ENCODE measurements at regions of chr11 and their contacts with region 1.

Region 1: DNA sequence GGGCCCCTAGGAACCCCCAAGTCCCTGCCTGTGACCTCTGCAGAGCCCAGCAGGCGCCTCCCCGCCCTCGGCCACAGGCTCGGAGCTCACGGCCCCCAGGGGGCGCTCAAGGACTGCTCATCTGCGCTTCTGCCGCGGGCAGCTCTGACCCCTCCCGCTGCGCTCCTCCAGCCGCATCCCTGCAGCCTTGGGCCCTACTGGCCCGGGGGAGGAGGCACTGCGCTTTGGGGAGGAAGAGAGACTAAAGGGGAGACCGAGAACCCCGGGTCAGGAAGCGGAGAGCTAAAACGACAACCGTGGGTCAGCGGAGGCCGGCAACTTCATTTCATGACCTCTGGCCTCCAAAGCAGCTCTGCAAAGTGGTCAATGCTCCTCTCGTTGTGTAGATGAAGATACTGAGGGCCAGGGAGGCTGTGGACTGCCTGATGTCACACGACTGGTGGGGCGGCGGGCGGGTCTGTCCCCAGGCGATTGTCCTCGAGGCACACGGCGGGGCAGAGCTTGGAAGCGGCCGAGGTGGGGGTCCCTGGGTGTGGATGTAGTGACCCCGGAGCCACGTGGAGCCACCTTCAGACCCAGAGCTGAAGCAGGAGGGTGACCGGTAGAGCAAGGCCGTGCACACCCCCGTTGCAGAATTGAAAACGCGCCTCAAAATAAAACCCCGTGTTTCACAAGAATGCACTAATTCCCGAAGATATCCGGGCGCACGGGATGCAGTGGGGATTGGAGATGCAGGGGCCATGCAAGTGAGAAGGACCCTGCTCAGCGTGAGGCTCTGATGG is 2.7 kb upstream of the KRTAP5-6 start:
- DNase-seq: peak; percentile 84 to 98
- H3K4me3 ChIP-seq: peak overlapping the region in 3 of 4 experiments; percentile 29 to 59 (median 45); a peak in 3 of 8 replicates
- H3K27ac ChIP-seq: no peak overlapping the region
- H3K4me1 ChIP-seq: peaks cover 0 to 10% (median 3%) of the 10 kb centered on the region in 4 experiments; a peak in 3 of 7 replicates
- H3K27me3 ChIP-seq: peaks cover 0 to 7% (median 0%) of the 10 kb centered on the region in 4 experiments; a peak in 3 of 7 replicates
- CTCF ChIP-seq: peak; percentile 81 to 97 (median 86)
- EP300 ChIP-seq: peak in 1 of 2 experiments; percentile 49; a peak in 1 of 3 replicates
- POLR2A ChIP-seq: no peak
- RAD21 ChIP-seq: peak; percentile 91 to 95

Region 2: DNA sequence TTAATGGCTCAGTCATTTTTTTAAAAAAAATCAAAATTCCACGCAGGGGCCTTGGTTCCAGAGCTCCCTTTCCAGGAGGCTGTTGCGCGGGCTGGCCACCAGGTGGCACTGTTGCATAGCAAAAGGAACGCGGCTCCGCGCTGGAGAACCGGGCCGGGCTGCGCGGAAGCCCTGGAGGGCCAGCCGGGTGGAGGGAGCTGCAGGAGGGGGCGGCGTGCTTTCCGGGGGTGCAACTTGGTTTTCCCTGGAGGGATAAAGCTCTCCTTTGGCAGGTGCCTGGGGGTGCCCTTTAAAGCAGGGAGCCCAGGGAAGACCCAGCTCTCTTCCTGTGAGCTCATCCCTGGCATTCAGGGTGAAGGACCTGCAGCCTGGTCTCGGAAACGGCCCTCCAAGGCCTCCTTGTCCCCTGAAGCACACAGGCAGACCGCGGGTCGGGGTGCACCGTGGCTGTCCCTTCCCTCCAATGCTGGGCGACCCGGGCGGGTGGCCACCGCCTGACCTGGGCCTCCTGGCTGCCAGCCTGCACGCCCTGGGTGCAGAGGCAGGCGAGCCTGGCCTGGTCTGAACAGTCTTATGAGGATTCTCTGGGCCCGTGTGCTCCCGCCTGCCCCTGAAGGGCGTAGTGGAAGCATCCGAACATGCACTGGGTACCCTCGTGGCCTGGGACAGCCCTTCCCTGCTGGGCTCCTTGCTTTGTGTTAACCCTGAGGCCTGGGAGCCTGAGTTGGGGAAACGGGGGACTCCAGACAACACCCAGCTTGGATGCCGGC is 41.3 kb before region 1 on chr11:
- CTCF ChIA-PET with region 1: interaction called, 88 read pairs
- POLR2A ChIA-PET with region 1: interaction called, 3 read pairs
- DNase-seq: peak in 1 of 2 experiments; percentile 95
- H3K4me3 ChIP-seq: peak overlapping the region in 3 of 4 experiments; percentile 19 to 53 (median 26); a peak in 4 of 8 replicates
- H3K27ac ChIP-seq: no peak overlapping the region
- H3K4me1 ChIP-seq: peaks cover 0 to 6% (median 2%) of the 10 kb centered on the region in 4 experiments; a peak in 3 of 7 replicates
- H3K27me3 ChIP-seq: peaks cover 0 to 9% (median 6%) of the 10 kb centered on the region in 4 experiments; a peak in 4 of 7 replicates
- CTCF ChIP-seq: peak; percentile 76 to 92 (median 88)
- EP300 ChIP-seq: no peak
- POLR2A ChIP-seq: no peak
- RAD21 ChIP-seq: peak; percentile 94 to 97

Region 3: GRCh38 chr11:1728931-1729691 is 34.9 kb after region 1 on chr11:
- CTCF ChIA-PET with region 1: interaction called, 13 read pairs
- POLR2A ChIA-PET with region 1: no interaction called
- DNase-seq: no peak
- H3K4me3 ChIP-seq: no peak overlapping the region
- H3K27ac ChIP-seq: no peak overlapping the region
- H3K4me1 ChIP-seq: no peaks in the 10 kb centered on the region
- H3K27me3 ChIP-seq: peaks cover 0 to 5% (median 1%) of the 10 kb centered on the region in 4 experiments; a peak in 2 of 7 replicates
- CTCF ChIP-seq: no peak
- EP300 ChIP-seq: no peak
- POLR2A ChIP-seq: no peak
- RAD21 ChIP-seq: no peak

Region 4: DNA sequence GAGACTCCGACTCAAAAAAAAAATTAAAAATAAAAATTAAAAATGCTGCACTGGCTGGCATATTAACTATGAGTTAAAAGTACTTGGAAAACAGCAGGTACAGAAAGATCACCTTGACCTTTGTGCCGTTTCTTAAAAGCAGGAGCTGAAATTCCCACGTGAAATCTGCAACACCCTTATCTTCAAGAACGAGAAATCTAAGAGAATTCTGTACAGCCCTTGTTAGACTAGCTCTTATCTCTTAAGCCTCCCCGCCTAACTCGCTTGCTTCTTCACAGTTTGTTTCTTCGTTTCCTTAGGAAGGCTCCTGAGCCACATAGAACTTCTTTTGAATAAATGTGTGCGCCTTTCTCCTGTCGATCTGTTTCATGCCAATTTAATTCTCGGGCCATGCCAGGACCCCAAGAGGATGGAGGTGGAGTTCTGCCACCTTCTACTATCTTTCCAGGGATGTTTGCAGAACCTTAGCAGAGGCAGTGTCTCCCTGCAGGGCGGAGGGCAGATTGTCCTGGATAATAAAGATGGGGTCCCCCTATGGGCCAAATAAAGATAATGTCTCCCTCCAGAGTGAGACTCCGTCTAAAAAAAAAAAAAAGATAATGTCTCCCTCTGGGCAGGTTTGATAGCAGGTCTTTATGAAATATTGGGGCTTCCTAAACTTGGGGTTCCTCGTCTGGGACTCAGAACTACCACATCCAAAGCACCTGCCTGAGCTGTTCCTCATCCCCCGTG is 113.2 kb after region 1 on chr11:
- CTCF ChIA-PET with region 1: interaction called, 38 read pairs
- POLR2A ChIA-PET with region 1: no interaction called
- DNase-seq: no peak
- H3K4me3 ChIP-seq: no peak overlapping the region
- H3K27ac ChIP-seq: no peak overlapping the region
- H3K4me1 ChIP-seq: 0 out of 7 replicates have a peak, but pooled peaks cover 0 to 3% (median 0%) of the 10 kb centered on the region in 4 experiments
- H3K27me3 ChIP-seq: peaks cover 0 to 2% (median 1%) of the 10 kb centered on the region in 4 experiments; a peak in 2 of 7 replicates
- CTCF ChIP-seq: peak in 2 of 3 experiments; percentile 29 to 41; a peak in 3 of 4 replicates
- EP300 ChIP-seq: no peak
- POLR2A ChIP-seq: no peak
- RAD21 ChIP-seq: peak; percentile 6 to 28; a peak in 1 of 4 replicates

Region 5: GRCh38 chr11:1845561-1846452 is 151.6 kb after region 1 on chr11:
- CTCF ChIA-PET with region 1: interaction called, 11 read pairs
- POLR2A ChIA-PET with region 1: no interaction called
- DNase-seq: no peak
- H3K4me3 ChIP-seq: no peak overlapping the region
- H3K27ac ChIP-seq: no peak overlapping the region
- H3K4me1 ChIP-seq: peaks cover 0 to 3% (median 0%) of the 10 kb centered on the region in 4 experiments; a peak in 1 of 7 replicates
- H3K27me3 ChIP-seq: no peaks in the 10 kb centered on the region
- CTCF ChIP-seq: no peak
- EP300 ChIP-seq: no peak
- POLR2A ChIP-seq: no peak
- RAD21 ChIP-seq: no peak

Region 6: DNA sequence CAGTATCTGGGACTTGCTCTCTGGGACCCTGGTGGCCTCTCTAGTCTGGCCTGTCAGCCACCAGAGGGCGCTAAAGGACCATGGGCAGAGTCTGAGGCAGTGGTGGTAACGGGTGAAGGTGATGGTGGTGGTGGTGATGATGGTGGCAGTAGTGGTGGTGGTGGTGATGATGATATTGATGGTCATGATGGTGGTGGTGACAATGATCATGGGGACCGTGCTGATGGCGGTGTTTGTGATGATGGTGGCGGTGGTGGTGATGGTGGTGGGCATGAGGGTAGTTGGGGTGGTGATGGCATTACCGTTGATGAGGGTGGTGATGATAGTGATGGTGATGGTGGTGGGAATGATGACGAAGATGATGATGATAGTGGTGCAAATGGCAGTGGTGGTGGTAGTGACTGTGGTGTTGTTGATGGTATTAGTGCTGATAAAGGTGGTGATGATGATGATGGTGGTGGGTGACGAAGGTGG is 734.1 kb after region 1 on chr11:
- CTCF ChIA-PET with region 1: no interaction called
- POLR2A ChIA-PET with region 1: no interaction called
- DNase-seq: peak in 1 of 2 experiments; percentile 93
- H3K4me3 ChIP-seq: no peak overlapping the region
- H3K27ac ChIP-seq: no peak overlapping the region
- H3K4me1 ChIP-seq: no peaks in the 10 kb centered on the region
- H3K27me3 ChIP-seq: peaks cover 0 to 10% (median 0%) of the 10 kb centered on the region in 4 experiments; a peak in 1 of 7 replicates
- CTCF ChIP-seq: peak in 2 of 3 experiments; percentile 94 to 97; a peak in 3 of 4 replicates
- EP300 ChIP-seq: no peak
- POLR2A ChIP-seq: no peak
- RAD21 ChIP-seq: peak; percentile 99